ENCODE measurements at regions of chr2 and their contacts with region 1.

Region 1: DNA sequence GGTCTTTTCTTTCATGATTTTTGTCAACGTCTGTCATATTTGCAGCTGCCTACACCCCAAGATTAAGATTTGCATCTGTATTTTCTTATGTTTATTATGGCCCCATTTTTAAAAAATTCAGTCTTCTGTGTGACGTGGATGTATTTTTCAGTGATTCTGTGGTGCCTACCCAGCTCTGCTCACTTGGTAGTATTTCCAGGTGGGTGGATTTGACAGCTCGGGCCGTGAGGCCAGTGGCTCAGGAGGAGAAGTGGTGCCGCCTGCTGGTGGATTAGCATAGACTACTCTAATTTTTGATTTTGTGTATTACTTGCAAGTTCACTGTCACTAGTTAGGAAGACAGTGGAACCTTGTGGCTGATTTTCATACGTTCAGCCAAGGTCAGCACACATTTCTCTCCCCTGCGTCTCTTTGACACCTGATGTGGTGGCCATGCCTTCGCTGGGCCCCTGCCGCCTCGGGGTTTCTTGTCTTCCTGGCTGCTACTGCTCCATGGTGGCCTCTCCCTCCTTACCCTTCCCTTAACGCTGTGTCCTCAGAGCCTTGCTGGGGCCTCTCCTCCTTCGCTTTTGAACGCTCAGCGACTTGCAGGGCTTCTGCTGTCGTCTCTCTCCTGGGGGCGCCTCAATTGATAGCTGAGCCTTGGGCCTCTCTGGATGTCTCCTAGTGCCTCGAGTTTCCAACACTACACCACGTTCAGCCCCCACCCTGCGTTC is 89.3 kb downstream of the DGKD start:
- DNase-seq: peak; percentile 73 to 92
- ATAC-seq: peak; percentile 84 to 99 (median 93)
- H3K4me3 ChIP-seq: no peak overlapping the region
- H3K4me3 Mint-ChIP-seq: no peak overlapping the region
- H3K27ac ChIP-seq: no peak overlapping the region
- H3K27ac Mint-ChIP-seq: peak overlapping the region; percentile 80 to 83
- H3K4me1 ChIP-seq: peaks cover 6% of the 10 kb centered on the region
- H3K4me1 Mint-ChIP-seq: peaks cover 38 to 46% of the 10 kb centered on the region in 2 donors
- H3K27me3 ChIP-seq: no peaks in the 10 kb centered on the region
- H3K27me3 Mint-ChIP-seq: no peaks in the 10 kb centered on the region
- CTCF ChIP-seq: peak; percentile 90

Region 2: DNA sequence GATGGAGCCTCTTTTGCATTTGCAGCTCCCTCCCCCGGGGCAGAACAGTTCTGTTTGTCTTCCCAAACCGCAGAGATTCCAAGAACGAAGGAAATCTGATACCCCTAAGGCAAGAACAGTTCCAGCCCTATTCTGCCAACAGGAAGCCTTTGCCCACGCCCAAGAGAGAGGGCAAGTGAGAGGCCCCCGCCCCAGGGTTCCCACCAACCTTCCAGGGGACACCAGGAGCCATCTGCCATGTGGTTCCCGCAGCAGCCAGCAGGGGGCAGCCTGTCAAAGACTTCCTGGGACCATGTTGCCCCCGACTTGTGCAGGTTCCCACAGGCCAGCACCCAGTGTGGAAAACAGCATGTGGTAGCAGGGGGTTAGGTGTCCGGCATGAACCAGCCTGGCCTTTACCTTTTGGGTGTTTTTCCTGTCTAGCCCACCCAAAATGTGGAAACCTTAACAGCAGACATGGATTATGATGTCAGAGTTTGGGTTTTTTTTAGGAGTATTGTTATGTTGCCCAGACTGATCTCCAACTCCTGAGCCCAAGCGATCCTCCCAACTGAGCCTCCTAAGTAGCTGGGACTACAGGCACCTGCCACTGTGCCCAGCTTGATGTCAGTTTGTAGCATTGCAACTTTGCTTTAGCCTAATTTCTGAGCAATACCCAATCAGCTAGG is 831.9 kb before region 1 on chr2:
- intact Hi-C with region 1: loop called (anchors 1 kb)
- DNase-seq: peak; percentile 64 to 77
- ATAC-seq: peak; percentile 62 to 86 (median 77)
- H3K4me3 ChIP-seq: no peak overlapping the region
- H3K4me3 Mint-ChIP-seq: no peak overlapping the region
- H3K27ac ChIP-seq: no peak overlapping the region
- H3K27ac Mint-ChIP-seq: no peak overlapping the region
- H3K4me1 ChIP-seq: no peaks in the 10 kb centered on the region
- H3K4me1 Mint-ChIP-seq: no peaks in the 10 kb centered on the region
- H3K27me3 ChIP-seq: no peaks in the 10 kb centered on the region
- H3K27me3 Mint-ChIP-seq: peaks cover 0 to 2% of the 10 kb centered on the region in 2 donors
- CTCF ChIP-seq: peak; percentile 83

Region 3: GRCh38 chr2:232854082-232854481 is 589.5 kb before region 1 on chr2:
- intact Hi-C with region 1: loop called (anchors 1 kb)
- DNase-seq: no peak
- ATAC-seq: no peak
- H3K4me3 ChIP-seq: no peak overlapping the region
- H3K4me3 Mint-ChIP-seq: no peak overlapping the region
- H3K27ac ChIP-seq: no peak overlapping the region
- H3K27ac Mint-ChIP-seq: peak overlapping the region in 1 of 2 donors; percentile 73
- H3K4me1 ChIP-seq: no peaks in the 10 kb centered on the region
- H3K4me1 Mint-ChIP-seq: peaks cover 3 to 5% of the 10 kb centered on the region in 2 donors
- H3K27me3 ChIP-seq: no peaks in the 10 kb centered on the region
- H3K27me3 Mint-ChIP-seq: no peaks in the 10 kb centered on the region
- CTCF ChIP-seq: no peak

Region 4: GRCh38 chr2:233270366-233270765 is 173.3 kb before region 1 on chr2:
- intact Hi-C with region 1: loop called (anchors 5 kb)
- DNase-seq: peak in 1 of 2 donors; percentile 72
- ATAC-seq: peak; percentile 36 to 49 (median 40)
- H3K4me3 ChIP-seq: no peak overlapping the region
- H3K4me3 Mint-ChIP-seq: peak overlapping the region; percentile 86
- H3K27ac ChIP-seq: peak overlapping the region; percentile 94
- H3K27ac Mint-ChIP-seq: peak overlapping the region; percentile 97 to 98
- H3K4me1 ChIP-seq: peaks cover 40% of the 10 kb centered on the region
- H3K4me1 Mint-ChIP-seq: peaks cover 56 to 57% of the 10 kb centered on the region in 2 donors
- H3K27me3 ChIP-seq: no peaks in the 10 kb centered on the region
- H3K27me3 Mint-ChIP-seq: no peaks in the 10 kb centered on the region
- CTCF ChIP-seq: no peak

Region 5: DNA sequence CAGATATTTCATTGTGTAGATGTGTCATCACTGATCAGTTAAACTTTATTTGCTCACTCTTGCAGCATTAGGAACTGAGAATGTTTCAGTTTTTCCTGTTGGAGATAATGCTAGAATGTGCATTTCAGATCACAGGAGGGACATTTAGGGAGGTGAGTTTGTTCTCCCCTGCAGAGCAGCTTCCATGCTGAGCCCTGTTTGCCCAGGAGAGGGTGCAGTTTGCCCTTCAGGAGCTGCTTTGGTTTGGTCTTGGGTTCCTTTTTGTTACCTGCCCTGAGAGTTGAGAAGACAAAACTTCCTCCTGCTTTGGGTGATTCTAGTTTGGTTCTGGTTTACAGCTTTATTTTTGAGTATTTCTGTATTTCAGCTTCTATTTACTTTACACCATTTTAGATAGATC is 39.4 kb before region 1 on chr2:
- intact Hi-C with region 1: loop called (anchors 1 kb)
- DNase-seq: peak in 1 of 2 donors; percentile 86
- ATAC-seq: peak in 2 of 3 donors; percentile 61 to 66
- H3K4me3 ChIP-seq: no peak overlapping the region
- H3K4me3 Mint-ChIP-seq: peak overlapping the region; percentile 28
- H3K27ac ChIP-seq: no peak overlapping the region
- H3K27ac Mint-ChIP-seq: peak overlapping the region; percentile 44 to 87
- H3K4me1 ChIP-seq: peaks cover 32% of the 10 kb centered on the region
- H3K4me1 Mint-ChIP-seq: peaks cover 50 to 65% of the 10 kb centered on the region in 2 donors
- H3K27me3 ChIP-seq: no peaks in the 10 kb centered on the region
- H3K27me3 Mint-ChIP-seq: no peaks in the 10 kb centered on the region
- CTCF ChIP-seq: peak; percentile 68